Activated T-helper 2 cell treated with anti-CD3 and anti-CD28 coated beads, Interferon-gamma antibody, Interleukin-2, Interleukin-4, amounts not matched to agents 10 μg/mL and 5 μg/mL and 100 μg/mL, durations not matched to agents 14 hours and 24 hours and 36 hours (primary cell): ENCODE measurements at regions of chr5 and their contacts with region 1.

Region 1: GRCh38 chr5:95554647-95555548 is at the starts of genes ARSK and SKIC3:
- DNase-seq: peak; percentile 93
- H3K4me3 Mint-ChIP-seq: peak within 1 kb of the TSS; percentile 93
- H3K27ac Mint-ChIP-seq: peak within 1 kb of the TSS; percentile 81
- H3K4me1 Mint-ChIP-seq: peaks cover 39% of the 10 kb centered on the region
- H3K27me3 Mint-ChIP-seq: no peaks in the 10 kb centered on the region
- total RNA-seq, gene ARSK: 4.0 and 4.6 TPM in 2 replicates
- total RNA-seq, gene SKIC3: 60.2 and 61.6 TPM in 2 replicates

Region 2: DNA sequence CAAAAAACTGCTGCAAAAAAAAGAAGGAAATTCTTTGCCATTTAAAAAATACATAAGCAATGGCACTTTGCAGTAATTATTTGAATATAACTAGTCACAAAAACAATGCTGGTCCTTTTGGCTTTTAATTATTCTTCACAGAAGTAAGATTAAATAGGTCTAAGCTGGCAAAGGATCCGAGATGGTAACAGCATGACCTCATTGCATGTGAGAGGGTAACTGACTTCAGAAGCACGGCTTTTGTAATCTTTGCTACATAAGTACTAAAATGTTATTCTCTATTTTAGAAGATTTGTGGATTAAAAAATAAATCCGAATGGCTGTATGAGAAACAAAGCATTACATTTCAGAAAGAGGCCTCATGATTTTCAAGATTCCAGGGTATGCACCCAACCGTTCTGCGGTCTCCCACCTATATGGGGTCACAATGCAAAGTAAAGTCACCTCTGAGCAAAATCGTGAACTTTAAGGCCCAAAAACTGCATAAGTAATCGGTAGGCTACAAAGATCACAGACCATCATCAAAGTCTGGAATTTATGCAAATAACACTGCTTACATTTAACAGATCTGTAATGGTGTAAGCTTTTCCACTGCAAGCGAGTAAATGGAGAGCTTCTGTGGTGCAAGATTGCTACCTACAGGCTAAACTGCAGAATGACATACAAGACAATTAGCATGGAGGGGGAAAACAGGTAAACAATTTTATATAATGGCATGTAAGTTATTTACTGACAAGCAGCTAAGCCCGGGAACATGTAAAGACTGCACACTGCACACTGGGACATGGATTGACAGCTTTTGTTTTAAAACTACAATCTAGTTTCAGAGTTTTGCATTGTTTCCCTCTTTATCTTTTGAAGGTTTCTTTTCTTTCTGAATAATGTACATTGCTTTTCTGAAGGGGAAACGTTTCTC is 704.8 kb before region 1 on chr5:
- intact Hi-C with region 1: no loop called
- DNase-seq: no peak
- H3K4me3 Mint-ChIP-seq: no peak overlapping the region
- H3K27ac Mint-ChIP-seq: no peak overlapping the region
- H3K4me1 Mint-ChIP-seq: peaks cover 2% of the 10 kb centered on the region
- H3K27me3 Mint-ChIP-seq: peaks cover 13% of the 10 kb centered on the region

Region 3: DNA sequence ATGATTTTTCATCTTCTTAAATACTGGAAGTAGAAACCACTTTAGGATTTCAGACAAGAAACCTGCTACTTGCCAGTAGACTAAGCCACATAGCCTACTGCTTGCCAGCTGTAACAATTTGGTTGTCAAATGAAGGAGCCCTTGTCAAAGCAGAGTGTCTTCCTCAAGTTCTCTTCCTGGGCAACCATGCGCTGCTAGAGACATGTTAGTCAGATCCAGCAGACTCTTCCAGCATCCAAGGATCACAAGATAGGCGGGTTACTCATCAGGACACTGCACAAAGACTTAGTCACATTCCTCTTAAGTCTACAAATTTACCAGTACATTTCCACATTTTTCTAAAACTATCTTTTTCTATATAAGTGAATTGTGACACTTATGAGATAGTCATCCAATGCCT is 24.5 kb before region 1 on chr5:
- intact Hi-C with region 1: no loop called
- DNase-seq: no peak
- H3K4me3 Mint-ChIP-seq: no peak overlapping the region
- H3K27ac Mint-ChIP-seq: no peak overlapping the region
- H3K4me1 Mint-ChIP-seq: peaks cover 21% of the 10 kb centered on the region
- H3K27me3 Mint-ChIP-seq: no peaks in the 10 kb centered on the region

Region 4: GRCh38 chr5:95591490-95591901 is 36.6 kb after region 1 on chr5:
- intact Hi-C with region 1: loop called (anchors 1 kb)
- DNase-seq: no peak
- H3K4me3 Mint-ChIP-seq: no peak overlapping the region
- H3K27ac Mint-ChIP-seq: peak overlapping the region; percentile 65
- H3K4me1 Mint-ChIP-seq: peaks cover 30% of the 10 kb centered on the region
- H3K27me3 Mint-ChIP-seq: no peaks in the 10 kb centered on the region

Region 5: GRCh38 chr5:95620030-95620869 is 65.4 kb after region 1 on chr5 and contains the start of gene GPR150:
- intact Hi-C with region 1: loop called (anchors 1 kb)
- DNase-seq: peak; percentile 50
- H3K4me3 Mint-ChIP-seq: peak within 1 kb of the TSS; percentile 81
- H3K27ac Mint-ChIP-seq: peak within 1 kb of the TSS; percentile 84
- H3K4me1 Mint-ChIP-seq: peaks cover 31% of the 10 kb centered on the region
- H3K27me3 Mint-ChIP-seq: peaks cover 18% of the 10 kb centered on the region
- total RNA-seq, gene GPR150: 0.11 and 0.14 TPM in 2 replicates

Region 6: DNA sequence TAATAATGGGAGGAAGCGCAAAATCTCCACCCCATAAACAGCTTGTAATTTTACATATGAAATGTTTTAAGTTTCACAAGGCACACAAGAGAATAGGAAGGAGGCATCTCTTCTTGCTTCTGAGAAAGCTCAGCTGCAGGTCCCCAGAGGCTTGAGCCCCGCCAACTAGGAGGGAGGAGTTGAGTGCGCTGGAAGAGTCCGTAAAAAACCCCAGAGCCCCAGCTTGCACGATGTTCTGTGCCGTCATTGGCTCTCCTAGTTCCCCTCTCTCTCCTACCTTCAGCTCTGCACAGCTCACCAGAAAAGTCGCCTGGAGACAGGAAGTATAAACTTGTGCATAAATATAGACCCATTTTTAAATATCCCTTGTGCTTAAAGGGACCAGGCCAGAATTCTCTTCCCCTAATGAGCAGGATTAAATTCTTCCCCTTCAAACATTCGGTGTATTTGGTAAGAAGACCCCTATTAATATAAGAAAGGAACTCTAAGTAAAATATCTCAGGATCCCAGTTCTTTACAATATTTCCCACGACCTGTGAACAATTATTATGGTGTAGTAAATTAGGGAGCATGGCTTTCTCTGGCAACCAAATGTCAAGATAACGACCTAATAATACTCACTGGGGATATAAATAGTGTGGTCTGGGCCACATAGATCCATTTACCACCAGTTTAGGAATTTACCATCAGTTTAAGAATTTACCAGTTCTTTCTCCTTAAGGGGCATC is 254.0 kb after region 1 on chr5:
- intact Hi-C with region 1: no loop called
- DNase-seq: peak; percentile 74
- H3K4me3 Mint-ChIP-seq: peak overlapping the region; percentile 5
- H3K27ac Mint-ChIP-seq: peak overlapping the region; percentile 60
- H3K4me1 Mint-ChIP-seq: peaks cover 49% of the 10 kb centered on the region
- H3K27me3 Mint-ChIP-seq: no peaks in the 10 kb centered on the region

Region 7: DNA sequence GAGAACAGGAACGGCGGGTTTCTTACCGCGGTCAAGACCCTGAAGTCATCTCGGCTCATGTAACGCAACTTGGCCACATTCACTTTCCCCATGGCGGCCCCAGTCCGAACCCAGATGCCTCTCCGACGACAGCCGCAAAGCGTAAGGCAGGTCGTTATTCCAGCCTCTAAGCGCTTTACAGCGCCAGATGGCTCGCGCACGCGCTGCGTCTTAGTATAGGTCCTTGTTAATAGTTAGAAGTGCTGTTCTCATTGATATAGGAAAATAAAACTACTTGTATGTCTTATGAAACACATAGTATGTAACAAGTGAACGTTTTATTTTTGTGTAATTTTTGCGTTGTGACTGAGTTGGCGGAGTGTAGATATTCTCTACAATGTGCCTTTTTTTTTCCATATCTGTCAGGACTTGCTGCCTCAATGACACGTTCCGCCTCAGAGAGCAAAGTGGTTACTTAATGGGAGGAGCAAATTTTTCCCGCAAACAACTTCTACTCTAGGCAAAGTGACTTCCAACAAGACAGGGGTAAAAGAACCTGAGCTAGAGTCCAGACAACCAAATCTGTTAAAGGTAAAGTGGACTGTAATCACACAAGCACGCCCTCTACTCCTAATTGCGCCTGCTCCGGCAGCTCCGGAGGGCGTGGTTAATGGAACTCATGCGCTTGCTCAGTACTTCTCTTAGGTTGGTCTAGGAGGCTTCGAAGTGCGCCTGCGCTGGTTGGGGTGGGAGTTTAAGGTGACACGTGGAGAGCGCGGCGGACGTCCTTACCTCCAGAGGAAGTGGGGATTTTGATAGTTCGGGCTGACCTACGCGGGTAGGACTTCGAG is 1628.4 kb after region 1 on chr5 and contains the start of gene RIOK2:
- intact Hi-C with region 1: loop called (anchors 10 kb)
- DNase-seq: peak; percentile 89
- H3K4me3 Mint-ChIP-seq: peak within 1 kb of the TSS; percentile 89
- H3K27ac Mint-ChIP-seq: peak within 1 kb of the TSS; percentile 100
- H3K4me1 Mint-ChIP-seq: peaks cover 24% of the 10 kb centered on the region
- H3K27me3 Mint-ChIP-seq: peaks cover 9% of the 10 kb centered on the region
- total RNA-seq, gene RIOK2: 28.1 and 30.5 TPM in 2 replicates